PC-9 (cell line): ENCODE measurements at regions of chr12 and their contacts with region 1.

Region 1: DNA sequence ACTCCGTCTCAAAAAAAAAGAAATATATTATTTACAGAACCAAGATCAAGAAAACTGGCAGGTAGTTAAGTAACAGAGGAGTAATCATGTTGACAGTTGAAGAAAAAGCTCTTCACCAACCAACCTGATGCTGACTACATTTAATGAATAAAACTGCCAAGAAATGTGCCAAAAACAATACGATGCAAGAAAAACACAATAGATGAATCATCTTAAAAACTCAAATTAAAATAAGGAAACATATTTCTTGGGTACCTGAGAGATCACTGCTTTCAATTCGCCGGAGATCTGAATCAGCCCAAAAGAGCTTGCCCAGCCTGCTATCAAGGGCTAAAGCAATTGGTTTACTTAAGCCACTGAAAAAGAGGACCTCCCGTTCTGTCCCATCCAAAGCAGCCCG is 76.4 kb downstream of the BCL2L14 start:
- DNase-seq: no peak
- H3K4me3 ChIP-seq: no peak overlapping the region
- H3K27ac ChIP-seq: no peak overlapping the region
- H3K4me1 ChIP-seq: no peaks in the 10 kb centered on the region
- H3K27me3 ChIP-seq: no peaks in the 10 kb centered on the region
- CTCF ChIP-seq: no peak

Region 2: GRCh38 chr12:10709808-10710207 is 1437.3 kb before region 1 on chr12:
- CTCF ChIA-PET with region 1: no interaction called
- POLR2A ChIA-PET with region 1: no interaction called
- intact Hi-C with region 1: loop called (anchors 5 kb)
- DNase-seq: no peak
- H3K4me3 ChIP-seq: no peak overlapping the region
- H3K27ac ChIP-seq: no peak overlapping the region
- H3K4me1 ChIP-seq: no peaks in the 10 kb centered on the region
- H3K27me3 ChIP-seq: no peaks in the 10 kb centered on the region
- CTCF ChIP-seq: no peak